Activated CD4-positive, alpha-beta memory T cell treated with anti-CD3 and anti-CD28 coated beads, Interleukin-2, amount 10 ng/mL, durations not matched to agents 7 days and 5 days (primary cell): ENCODE measurements at regions of chr2 and their contacts with region 1.

Region 1: GRCh38 chr2:216034065-216034464 is 20.7 kb upstream of the MREG start:
- DNase-seq: peak; percentile 83
- H3K4me3 Mint-ChIP-seq: no peak overlapping the region
- H3K27ac Mint-ChIP-seq: no peak overlapping the region
- H3K4me1 Mint-ChIP-seq: peaks cover 49% of the 10 kb centered on the region
- H3K27me3 Mint-ChIP-seq: no peaks in the 10 kb centered on the region

Region 2: DNA sequence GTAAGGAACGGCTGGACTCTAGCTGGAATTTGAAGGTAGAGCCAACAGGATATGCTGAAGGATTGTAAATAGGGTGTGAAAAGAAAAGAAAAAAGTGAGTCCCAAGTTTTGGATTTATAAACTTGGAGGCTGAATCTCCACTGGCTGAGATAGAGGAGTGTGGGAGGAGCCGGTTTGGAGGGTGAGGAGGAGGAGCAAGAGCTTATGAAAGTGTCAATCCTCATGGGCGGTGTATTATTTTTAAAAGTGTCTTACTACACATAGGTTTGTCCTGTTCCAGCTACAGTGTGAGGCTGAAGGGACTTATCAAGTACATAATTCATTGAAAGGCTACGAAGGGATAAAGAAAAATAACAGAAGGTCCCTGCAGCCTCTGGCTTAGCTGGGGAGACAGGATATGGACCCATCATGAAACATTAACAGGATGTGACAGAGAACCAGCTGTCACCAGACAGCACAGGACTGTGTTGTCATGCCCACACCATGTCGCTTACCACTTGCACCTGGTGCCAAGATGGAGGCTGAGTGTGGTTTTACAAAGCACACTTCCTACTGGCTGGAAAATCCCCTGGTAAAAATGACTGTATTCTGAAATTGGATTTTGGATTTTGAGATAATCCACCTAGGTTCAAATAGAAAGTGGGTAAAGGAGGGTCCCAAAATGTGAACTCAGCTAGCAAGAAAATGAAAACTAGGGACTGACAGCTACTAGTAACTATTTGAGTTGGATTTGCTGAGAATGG is 18.2 kb before region 1 on chr2:
- CTCF ChIA-PET with region 1: interaction called, 51 read pairs
- POLR2A ChIA-PET with region 1: interaction called, 14 read pairs
- DNase-seq: peak; percentile 74
- H3K4me3 Mint-ChIP-seq: peak overlapping the region; percentile 25
- H3K27ac Mint-ChIP-seq: peak overlapping the region; percentile 91
- H3K4me1 Mint-ChIP-seq: peaks cover 62% of the 10 kb centered on the region
- H3K27me3 Mint-ChIP-seq: no peaks in the 10 kb centered on the region

Region 3: DNA sequence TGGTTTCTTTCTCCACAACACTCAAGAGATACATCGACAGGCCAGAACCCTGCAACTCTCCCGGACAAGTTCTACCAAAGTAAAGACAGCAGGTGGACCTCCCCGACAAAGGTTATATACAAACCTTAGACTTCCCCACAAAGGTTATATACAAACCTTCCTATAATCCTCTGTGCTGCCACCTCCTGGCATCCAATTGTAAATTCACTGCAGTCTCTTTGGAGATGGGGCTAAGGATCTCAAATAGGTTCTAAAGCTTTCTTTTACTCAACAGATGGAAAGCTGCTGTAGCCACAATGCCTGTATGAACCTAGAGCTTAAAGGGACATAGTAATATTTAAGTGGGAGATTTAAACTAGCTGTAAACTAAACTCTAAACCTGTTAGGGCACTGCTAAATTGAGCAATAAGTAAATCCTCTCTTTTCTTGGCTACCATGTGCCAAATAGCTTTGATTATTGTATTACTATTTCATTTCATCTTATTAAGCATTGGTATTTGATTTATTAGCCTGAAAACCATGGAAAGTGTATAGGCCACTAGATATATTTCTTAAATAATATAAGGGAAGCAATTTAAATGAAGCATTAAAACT is 10.9 kb before region 1 on chr2:
- CTCF ChIA-PET with region 1: interaction called, 51 read pairs
- POLR2A ChIA-PET with region 1: interaction called, 14 read pairs
- DNase-seq: peak; percentile 59
- H3K4me3 Mint-ChIP-seq: no peak overlapping the region
- H3K27ac Mint-ChIP-seq: no peak overlapping the region
- H3K4me1 Mint-ChIP-seq: peaks cover 6% of the 10 kb centered on the region
- H3K27me3 Mint-ChIP-seq: no peaks in the 10 kb centered on the region

Region 4: DNA sequence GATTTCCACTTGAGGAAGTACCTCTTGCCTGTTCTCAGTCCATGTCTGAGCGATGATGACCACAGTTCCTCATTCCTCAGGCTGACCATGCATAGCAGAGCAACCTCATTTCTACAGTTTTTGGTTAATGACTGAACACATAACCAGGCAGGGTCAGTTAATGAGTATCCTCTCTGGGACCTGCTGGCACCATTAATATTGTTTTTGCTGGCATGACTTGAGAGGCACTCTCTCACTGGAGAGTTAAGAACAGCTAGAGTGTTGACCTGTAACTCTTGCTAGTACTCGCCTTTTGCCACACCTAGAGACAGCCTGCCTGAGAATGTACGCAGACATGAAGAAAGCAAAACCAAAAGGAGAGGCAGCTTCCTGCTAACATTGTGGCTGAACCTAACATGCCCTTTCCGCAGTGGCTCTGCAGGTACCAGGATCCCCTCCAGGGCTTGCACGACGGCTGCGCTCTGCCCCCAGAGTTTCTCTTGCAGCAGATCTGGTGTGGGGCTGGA is 23.7 kb after region 1 on chr2:
- CTCF ChIA-PET with region 1: interaction called, 14 read pairs
- POLR2A ChIA-PET with region 1: interaction called, 4 read pairs
- DNase-seq: peak; percentile 71
- H3K4me3 Mint-ChIP-seq: peak overlapping the region; percentile 64
- H3K27ac Mint-ChIP-seq: peak overlapping the region; percentile 95
- H3K4me1 Mint-ChIP-seq: peaks cover 41% of the 10 kb centered on the region
- H3K27me3 Mint-ChIP-seq: no peaks in the 10 kb centered on the region